ENCODE measurements at regions of chr11 and their contacts with region 1.

Region 1: DNA sequence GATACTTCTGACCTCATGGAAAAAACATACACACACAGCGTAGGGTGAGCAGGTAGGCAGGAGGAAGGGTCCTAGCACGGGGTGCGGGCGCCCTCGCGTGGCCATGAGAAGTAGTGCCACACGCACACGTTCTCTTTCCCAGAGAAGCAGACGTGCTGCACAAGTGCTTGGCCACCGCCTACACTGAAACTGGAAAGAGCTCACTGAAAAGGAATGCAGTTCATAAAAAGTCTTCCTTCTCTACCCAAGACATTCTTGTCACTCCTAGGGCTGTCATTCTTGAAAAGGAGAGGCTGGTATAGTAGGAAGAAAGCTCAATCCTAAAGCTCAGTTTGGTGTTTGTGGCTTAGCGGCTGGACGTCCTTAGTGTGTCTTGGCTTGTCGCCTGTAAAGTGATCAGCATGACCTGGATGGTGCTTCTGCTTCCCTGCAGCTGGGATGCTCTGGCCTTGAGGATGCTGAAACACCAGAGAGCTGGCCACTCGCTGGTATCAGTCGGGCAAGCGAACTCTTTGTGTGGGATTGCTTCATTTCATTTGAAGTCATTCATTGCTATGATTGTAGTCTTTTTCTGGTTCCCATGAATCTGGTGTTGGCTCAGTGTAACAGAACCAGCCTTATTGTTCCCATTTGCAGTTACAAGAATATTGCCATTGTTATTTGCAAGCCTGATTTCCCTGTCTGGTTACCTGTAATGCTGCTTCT is 303.8 kb downstream of the NTM start:
- DNase-seq: peak; percentile 44
- H3K4me3 ChIP-seq: no peak overlapping the region
- H3K27ac ChIP-seq: no peak overlapping the region
- H3K4me1 ChIP-seq: no peaks in the 10 kb centered on the region
- CTCF ChIP-seq: peak; percentile 89

Region 2: GRCh38 chr11:130924770-130925169 is 749.4 kb before region 1 on chr11:
- CTCF ChIA-PET with region 1: no interaction called
- POLR2A ChIA-PET with region 1: no interaction called
- intact Hi-C with region 1: loop called (anchors 5 kb)
- DNase-seq: no peak
- H3K4me3 ChIP-seq: no peak overlapping the region
- H3K27ac ChIP-seq: no peak overlapping the region
- H3K4me1 ChIP-seq: no peaks in the 10 kb centered on the region
- CTCF ChIP-seq: no peak

Region 3: GRCh38 chr11:131064373-131064991 is 609.7 kb before region 1 on chr11:
- CTCF ChIA-PET with region 1: interaction called, 3 read pairs
- POLR2A ChIA-PET with region 1: interaction called, 4 read pairs
- intact Hi-C with region 1: loop called (anchors 1 kb)
- DNase-seq: peak; percentile 68
- H3K4me3 ChIP-seq: no peak overlapping the region
- H3K27ac ChIP-seq: no peak overlapping the region
- H3K4me1 ChIP-seq: no peaks in the 10 kb centered on the region
- CTCF ChIP-seq: peak; percentile 94

Region 4: DNA sequence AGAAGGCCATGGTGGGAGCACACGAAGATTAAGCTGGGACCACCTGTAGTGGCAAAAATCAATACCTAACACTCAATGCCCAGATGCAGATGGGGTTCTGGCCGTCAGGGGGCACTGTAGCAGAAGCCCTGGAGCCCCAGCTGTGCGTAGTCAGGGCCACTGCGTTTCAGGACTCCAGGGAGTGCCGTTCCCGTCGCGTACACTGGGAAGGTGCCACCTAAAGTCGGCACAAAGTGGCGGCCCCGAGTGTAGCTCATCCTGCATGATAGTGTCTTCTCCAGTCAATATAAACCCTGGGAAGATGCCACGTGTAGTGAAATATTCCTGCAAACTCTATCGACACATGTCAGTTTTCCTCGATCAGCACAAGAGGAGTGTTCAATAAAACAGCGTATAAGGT is 427.5 kb before region 1 on chr11:
- CTCF ChIA-PET with region 1: no interaction called
- POLR2A ChIA-PET with region 1: no interaction called
- intact Hi-C with region 1: loop called (anchors 5 kb)
- DNase-seq: peak; percentile 1
- H3K4me3 ChIP-seq: no peak overlapping the region
- H3K27ac ChIP-seq: no peak overlapping the region
- H3K4me1 ChIP-seq: no peaks in the 10 kb centered on the region
- CTCF ChIP-seq: peak; percentile 63

Region 5: DNA sequence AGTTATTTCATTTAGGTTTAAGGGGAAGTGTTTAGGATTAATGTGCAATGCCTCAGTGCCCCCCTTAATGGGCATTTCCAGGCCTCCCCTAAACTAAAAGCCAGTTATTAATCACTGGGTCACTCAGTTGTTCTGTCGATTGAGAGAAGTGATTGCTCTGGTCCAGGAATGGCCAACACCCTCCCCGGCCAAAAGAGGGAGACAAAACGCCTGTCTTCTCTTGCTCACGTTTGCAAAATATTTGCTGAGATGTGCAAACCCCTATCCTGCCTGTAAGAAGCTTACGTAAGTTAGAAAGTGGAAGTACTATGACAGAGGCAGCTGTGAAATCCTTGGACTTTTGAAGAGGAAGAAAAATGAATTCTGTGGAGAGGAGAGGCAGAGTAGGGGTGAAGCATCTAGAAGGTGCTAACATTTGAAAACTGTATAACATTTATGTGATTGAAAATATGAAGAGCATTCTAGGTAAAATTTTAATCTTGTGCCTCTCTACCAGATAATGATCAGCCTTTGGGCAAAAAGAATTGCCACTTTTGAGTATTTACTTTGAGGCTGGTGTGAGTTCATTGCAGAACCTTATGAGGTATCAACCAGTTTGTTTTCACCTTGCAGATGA is 266.1 kb before region 1 on chr11:
- CTCF ChIA-PET with region 1: no interaction called
- POLR2A ChIA-PET with region 1: no interaction called
- intact Hi-C with region 1: loop called (anchors 5 kb)
- DNase-seq: peak; percentile 17
- H3K4me3 ChIP-seq: no peak overlapping the region
- H3K27ac ChIP-seq: no peak overlapping the region
- H3K4me1 ChIP-seq: no peaks in the 10 kb centered on the region
- CTCF ChIP-seq: peak; percentile 77

Region 6: GRCh38 chr11:131579932-131580387 is 94.2 kb before region 1 on chr11:
- CTCF ChIA-PET with region 1: no interaction called
- POLR2A ChIA-PET with region 1: no interaction called
- intact Hi-C with region 1: loop called (anchors 1 kb)
- DNase-seq: peak; percentile 3
- H3K4me3 ChIP-seq: no peak overlapping the region
- H3K27ac ChIP-seq: no peak overlapping the region
- H3K4me1 ChIP-seq: no peaks in the 10 kb centered on the region
- CTCF ChIP-seq: peak; percentile 53

Region 7: GRCh38 chr11:131875611-131876010 is 201.4 kb after region 1 on chr11:
- CTCF ChIA-PET with region 1: no interaction called
- POLR2A ChIA-PET with region 1: no interaction called
- intact Hi-C with region 1: no loop called
- DNase-seq: no peak
- H3K4me3 ChIP-seq: no peak overlapping the region
- H3K27ac ChIP-seq: no peak overlapping the region
- H3K4me1 ChIP-seq: no peaks in the 10 kb centered on the region
- CTCF ChIP-seq: no peak

Region 8: DNA sequence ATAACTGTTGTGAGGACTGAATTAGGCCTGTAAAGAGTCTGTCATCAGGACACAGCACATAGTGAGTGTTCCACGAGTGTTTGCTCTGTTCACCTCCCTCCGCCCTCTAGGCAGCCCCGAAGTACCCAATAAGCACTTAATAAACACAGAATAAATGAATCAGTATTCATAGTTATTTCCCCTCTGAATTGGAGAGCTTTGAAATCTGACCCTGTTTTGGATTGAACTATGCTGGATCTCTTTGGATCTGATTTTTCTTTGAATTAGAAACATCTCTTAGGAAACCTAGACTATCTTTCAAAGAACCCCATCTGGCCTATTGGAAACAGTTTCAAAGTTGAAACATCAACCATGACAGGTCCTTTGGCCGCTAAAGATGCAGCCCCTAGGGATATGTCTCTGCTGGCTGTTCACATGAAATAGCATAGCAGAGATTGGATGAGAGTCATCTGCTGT is 311.7 kb after region 1 on chr11:
- CTCF ChIA-PET with region 1: no interaction called
- POLR2A ChIA-PET with region 1: no interaction called
- intact Hi-C with region 1: no loop called
- DNase-seq: no peak
- H3K4me3 ChIP-seq: no peak overlapping the region
- H3K27ac ChIP-seq: no peak overlapping the region
- H3K4me1 ChIP-seq: no peaks in the 10 kb centered on the region
- CTCF ChIP-seq: no peak

Measured in OCI-LY7 (cell line).